PC-3 (cell line): ENCODE measurements at regions of chr1 and their contacts with region 1.

Region 1: GRCh38 chr1:218339267-218339831 is 5.8 kb upstream of the TGFB2 start:
- DNase-seq: peak; percentile 88
- ATAC-seq: peak; percentile 63
- H3K4me3 ChIP-seq: no peak overlapping the region
- H3K27ac ChIP-seq: peak overlapping the region; percentile 6
- H3K4me1 ChIP-seq: peaks cover 18% of the 10 kb centered on the region
- H3K27me3 ChIP-seq: no peaks in the 10 kb centered on the region
- CTCF ChIP-seq: peak; percentile 98

Region 2: GRCh38 chr1:218401998-218402785 is 62.8 kb after region 1 on chr1:
- CTCF ChIA-PET with region 1: no interaction called
- POLR2A ChIA-PET with region 1: no interaction called
- intact Hi-C with region 1: no loop called
- DNase-seq: no peak
- ATAC-seq: no peak
- H3K4me3 ChIP-seq: no peak overlapping the region
- H3K27ac ChIP-seq: no peak overlapping the region
- H3K4me1 ChIP-seq: peaks cover 15% of the 10 kb centered on the region
- H3K27me3 ChIP-seq: no peaks in the 10 kb centered on the region
- CTCF ChIP-seq: no peak

Region 3: DNA sequence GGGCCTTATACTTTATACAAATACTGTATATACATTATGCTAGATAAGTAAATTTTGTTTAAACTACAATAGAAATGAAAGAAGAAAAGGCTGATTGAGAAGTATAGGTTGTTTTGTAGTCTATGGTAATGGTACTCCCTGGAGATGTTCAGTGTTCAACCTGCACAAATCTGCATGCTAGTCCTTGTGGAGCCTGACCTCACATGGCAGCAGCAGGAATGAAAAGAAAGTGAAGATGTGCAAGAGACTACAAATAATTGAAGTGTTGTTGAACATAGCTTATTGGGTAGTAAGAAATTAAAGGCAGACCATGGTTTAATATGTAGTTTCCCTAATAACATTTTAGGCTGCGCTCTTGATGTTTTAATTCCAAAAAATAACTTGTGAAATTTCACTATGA is 207.0 kb after region 1 on chr1:
- CTCF ChIA-PET with region 1: no interaction called
- POLR2A ChIA-PET with region 1: no interaction called
- intact Hi-C with region 1: loop called (anchors 1 kb)
- DNase-seq: peak; percentile 39
- ATAC-seq: peak; percentile 65
- H3K4me3 ChIP-seq: no peak overlapping the region
- H3K27ac ChIP-seq: no peak overlapping the region
- H3K4me1 ChIP-seq: no peaks in the 10 kb centered on the region
- H3K27me3 ChIP-seq: no peaks in the 10 kb centered on the region
- CTCF ChIP-seq: peak; percentile 55

Region 4: GRCh38 chr1:218557731-218558130 is 218.4 kb after region 1 on chr1:
- CTCF ChIA-PET with region 1: no interaction called
- POLR2A ChIA-PET with region 1: no interaction called
- intact Hi-C with region 1: loop called (anchors 1 kb)
- DNase-seq: peak; percentile 93
- ATAC-seq: peak; percentile 83
- H3K4me3 ChIP-seq: no peak overlapping the region
- H3K27ac ChIP-seq: no peak overlapping the region
- H3K4me1 ChIP-seq: peaks cover 11% of the 10 kb centered on the region
- H3K27me3 ChIP-seq: no peaks in the 10 kb centered on the region
- CTCF ChIP-seq: no peak